ENCODE measurements at regions of chr1 and their contacts with region 1.

Region 1: GRCh38 chr1:182453626-182454025 is 3.7 kb downstream of the RGSL1 start:
- DNase-seq: no peak
- ATAC-seq: no peak
- H3K4me3 ChIP-seq: no peak overlapping the region
- H3K27ac ChIP-seq: no peak overlapping the region
- H3K4me1 ChIP-seq: no peaks in the 10 kb centered on the region
- H3K27me3 ChIP-seq: peaks cover 0 to 9% (median 0%) of the 10 kb centered on the region in 9 donors
- CTCF ChIP-seq: no peak
- POLR2A ChIP-seq: no peak

Region 2: DNA sequence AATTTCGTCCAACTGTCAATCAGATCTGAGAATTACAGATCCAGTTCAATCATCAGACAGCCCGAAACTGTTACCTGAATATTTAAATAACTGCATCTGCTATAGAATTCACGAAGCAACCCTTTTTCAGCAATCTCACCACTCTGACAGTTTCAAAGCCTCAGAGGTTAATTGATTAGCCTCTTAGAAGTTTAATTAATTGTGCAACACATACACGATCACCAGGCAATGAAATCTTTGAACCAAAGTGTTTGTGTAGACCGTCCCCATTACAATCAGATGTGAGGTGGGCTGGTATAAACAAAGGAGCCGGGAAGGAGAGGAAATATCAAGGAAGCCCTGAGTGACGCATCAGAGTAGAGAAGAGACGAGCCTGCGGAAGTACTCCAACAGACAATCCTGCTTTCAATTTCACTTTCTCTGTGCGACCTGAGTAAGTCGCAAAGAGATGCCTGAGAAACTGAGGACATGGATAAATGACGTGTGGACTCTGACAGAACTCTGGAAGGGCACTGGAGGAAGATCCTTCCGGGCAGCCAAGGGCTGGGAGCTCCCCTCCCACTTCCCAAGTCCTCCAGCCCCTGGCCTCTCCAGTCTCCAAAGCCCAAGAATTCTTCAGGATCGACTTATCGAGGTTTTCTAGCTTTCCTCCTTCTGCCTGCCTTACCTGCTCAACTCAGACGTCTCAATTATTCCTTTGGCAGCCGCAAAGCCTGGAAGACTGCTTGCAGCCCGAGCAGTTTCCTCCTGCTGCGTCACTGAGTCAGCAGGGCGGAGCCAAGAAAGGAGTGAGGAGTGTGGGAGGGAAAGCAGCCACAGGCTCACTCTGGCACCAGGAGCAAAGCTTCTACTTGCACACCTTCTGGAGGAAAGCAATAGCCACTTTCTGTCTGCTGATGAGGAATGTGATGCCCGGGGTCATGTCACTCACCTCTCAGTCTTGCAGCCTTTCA is 135.2 kb after region 1 on chr1 and contains the start of gene RNASEL:
- intact Hi-C with region 1: loop called in 6 of 10 experiments (anchors 10 kb)
- DNase-seq: peak; percentile 70 to 82 (median 76)
- ATAC-seq: peak; percentile 82 to 94 (median 92)
- H3K4me3 ChIP-seq: peak within 1 kb of the TSS; percentile 49 to 90 (median 74)
- H3K27ac ChIP-seq: peak within 1 kb of the TSS; percentile 51 to 99 (median 92)
- H3K4me1 ChIP-seq: peaks cover 0 to 40% (median 6%) of the 10 kb centered on the region in 12 donors
- H3K27me3 ChIP-seq: no peaks in the 10 kb centered on the region
- CTCF ChIP-seq: no peak
- POLR2A ChIP-seq: peak in 1 of 2 donors; percentile 33
- total RNA-seq, gene RNASEL: 2.0 to 6.3 (median 3.0) TPM